Activated CD4-positive, alpha-beta T cell treated with anti-CD3 and anti-CD28 coated beads, Interleukin-2, amount 10 ng/mL, durations not matched to agents 24 days and 14 days (primary cell): ENCODE measurements at regions of chr3 and their contacts with region 1.

Region 1: GRCh38 chr3:4303187-4304123 is at the start of gene SETMAR:
- DNase-seq: peak; percentile 95
- H3K4me3 Mint-ChIP-seq: peak within 1 kb of the TSS; percentile 92
- H3K27ac Mint-ChIP-seq: peak within 1 kb of the TSS; percentile 98
- H3K4me1 Mint-ChIP-seq: peaks cover 21% of the 10 kb centered on the region
- H3K27me3 Mint-ChIP-seq: peaks cover 2% of the 10 kb centered on the region
- total RNA-seq, gene SETMAR: 17.8 and 18.1 TPM in 2 replicates

Region 2: GRCh38 chr3:3126477-3127431 is 1176.7 kb before region 1 on chr3 and contains the start of gene TRNT1:
- intact Hi-C with region 1: loop called (anchors 2 kb)
- DNase-seq: peak; percentile 99
- H3K4me3 Mint-ChIP-seq: peak within 1 kb of the TSS; percentile 100
- H3K27ac Mint-ChIP-seq: peak within 1 kb of the TSS; percentile 99
- H3K4me1 Mint-ChIP-seq: peaks cover 24% of the 10 kb centered on the region
- H3K27me3 Mint-ChIP-seq: peaks cover 1% of the 10 kb centered on the region
- total RNA-seq, gene TRNT1: 55.7 and 62.4 TPM in 2 replicates

Region 3: GRCh38 chr3:3179407-3180094 is 1123.9 kb before region 1 on chr3 and contains the start of gene CRBN:
- intact Hi-C with region 1: loop called (anchors 5 kb)
- DNase-seq: peak; percentile 97
- H3K4me3 Mint-ChIP-seq: peak within 1 kb of the TSS; percentile 97
- H3K27ac Mint-ChIP-seq: peak within 1 kb of the TSS; percentile 89
- H3K4me1 Mint-ChIP-seq: peaks cover 37% of the 10 kb centered on the region
- H3K27me3 Mint-ChIP-seq: peaks cover 8% of the 10 kb centered on the region
- total RNA-seq, gene CRBN: 37.0 and 40.0 TPM in 2 replicates

Region 4: GRCh38 chr3:3603351-3603750 is 700.1 kb before region 1 on chr3:
- intact Hi-C with region 1: no loop called
- DNase-seq: no peak
- H3K4me3 Mint-ChIP-seq: no peak overlapping the region
- H3K27ac Mint-ChIP-seq: no peak overlapping the region
- H3K4me1 Mint-ChIP-seq: no peaks in the 10 kb centered on the region
- H3K27me3 Mint-ChIP-seq: no peaks in the 10 kb centered on the region

Region 5: DNA sequence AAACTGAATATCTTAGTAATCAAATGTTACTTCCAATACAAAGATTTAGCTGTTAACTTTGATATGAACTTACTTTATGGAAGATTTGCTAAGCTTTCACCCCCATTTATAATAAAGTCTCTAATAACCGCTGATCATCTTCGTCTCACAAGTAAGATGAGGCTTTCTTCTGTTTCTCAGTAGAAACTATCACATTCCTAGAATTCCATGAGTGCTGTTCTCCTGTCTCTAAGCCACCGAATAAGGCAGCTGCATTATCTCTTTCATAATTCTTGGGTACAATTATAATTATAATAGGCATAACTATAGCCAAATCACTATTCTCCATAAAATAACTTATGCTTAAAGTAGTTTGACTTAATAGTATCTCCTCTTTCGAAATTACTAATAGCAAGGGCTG is 18.6 kb before region 1 on chr3:
- intact Hi-C with region 1: no loop called
- DNase-seq: no peak
- H3K4me3 Mint-ChIP-seq: no peak overlapping the region
- H3K27ac Mint-ChIP-seq: no peak overlapping the region
- H3K4me1 Mint-ChIP-seq: no peaks in the 10 kb centered on the region
- H3K27me3 Mint-ChIP-seq: peaks cover 21% of the 10 kb centered on the region

Region 6: GRCh38 chr3:4633078-4634004 is 329.9 kb after region 1 on chr3:
- intact Hi-C with region 1: loop called (anchors 5 kb)
- DNase-seq: peak; percentile 71
- H3K4me3 Mint-ChIP-seq: no peak overlapping the region
- H3K27ac Mint-ChIP-seq: no peak overlapping the region
- H3K4me1 Mint-ChIP-seq: peaks cover 5% of the 10 kb centered on the region
- H3K27me3 Mint-ChIP-seq: no peaks in the 10 kb centered on the region

Region 7: DNA sequence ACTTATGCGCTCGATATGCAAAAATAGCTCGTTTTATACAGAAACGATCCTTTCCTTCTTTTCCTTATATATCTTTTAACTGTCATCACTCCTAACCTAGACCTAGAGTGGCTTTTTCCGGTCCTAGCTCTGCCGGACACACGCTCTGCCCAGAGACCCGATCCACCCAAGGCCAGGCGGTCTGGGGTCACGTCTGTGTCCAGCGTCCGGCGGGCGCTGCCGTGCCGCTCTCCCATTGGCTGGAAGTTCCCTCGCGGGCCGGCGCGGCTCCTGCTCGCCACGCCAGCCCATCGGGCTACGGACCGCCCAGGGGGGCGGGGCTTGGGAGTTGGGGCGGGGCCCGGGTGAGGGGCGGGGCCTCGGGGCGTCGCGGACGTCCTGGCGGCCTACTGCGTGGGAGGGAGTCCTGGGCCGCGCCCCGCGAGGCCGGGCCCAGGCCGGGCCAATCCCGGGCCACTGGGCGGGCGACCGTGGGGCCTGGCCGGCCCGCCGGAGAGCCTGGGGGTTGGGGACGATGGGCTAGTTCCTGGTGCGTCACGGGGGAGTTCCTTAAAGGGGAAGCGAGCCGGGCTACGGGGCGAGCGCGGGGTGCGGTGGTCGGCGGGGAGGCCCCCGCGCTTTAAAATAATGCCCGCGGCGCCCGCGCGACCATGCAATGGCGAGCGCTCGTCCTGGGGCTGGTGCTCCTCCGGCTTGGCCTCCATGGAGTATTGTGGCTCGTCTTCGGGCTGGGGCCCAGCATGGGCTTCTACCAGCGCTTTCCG is 883.9 kb after region 1 on chr3 and contains the start of gene EDEM1:
- intact Hi-C with region 1: loop called (anchors 5 kb)
- DNase-seq: peak; percentile 99
- H3K4me3 Mint-ChIP-seq: peak within 1 kb of the TSS; percentile 99
- H3K27ac Mint-ChIP-seq: peak within 1 kb of the TSS; percentile 97
- H3K4me1 Mint-ChIP-seq: peaks cover 29% of the 10 kb centered on the region
- H3K27me3 Mint-ChIP-seq: no peaks in the 10 kb centered on the region
- total RNA-seq, gene EDEM1: 167 and 168 TPM in 2 replicates